ENCODE measurements at regions of chr18 and their contacts with region 1.

Region 1: GRCh38 chr18:4106407-4107033 is 348.6 kb downstream of the DLGAP1 start:
- DNase-seq: peak; percentile 8 to 65 (median 43)
- ATAC-seq: peak; percentile 52
- H3K4me3 ChIP-seq: no peak overlapping the region
- H3K4me3 Mint-ChIP-seq: no peak overlapping the region
- H3K27ac ChIP-seq: no peak overlapping the region
- H3K27ac Mint-ChIP-seq: no peak overlapping the region
- H3K4me1 ChIP-seq: no peaks in the 10 kb centered on the region
- H3K4me1 Mint-ChIP-seq: no peaks in the 10 kb centered on the region
- H3K27me3 ChIP-seq: no peaks in the 10 kb centered on the region
- H3K27me3 Mint-ChIP-seq: peaks cover 6% of the 10 kb centered on the region
- CTCF ChIP-seq: peak; percentile 85

Region 2: GRCh38 chr18:3931542-3932112 is 174.9 kb before region 1 on chr18:
- CTCF ChIA-PET with region 1: no interaction called
- POLR2A ChIA-PET with region 1: no interaction called
- intact Hi-C with region 1: no loop called
- DNase-seq: no peak
- ATAC-seq: no peak
- H3K4me3 ChIP-seq: no peak overlapping the region
- H3K4me3 Mint-ChIP-seq: no peak overlapping the region
- H3K27ac ChIP-seq: no peak overlapping the region
- H3K27ac Mint-ChIP-seq: no peak overlapping the region
- H3K4me1 ChIP-seq: no peaks in the 10 kb centered on the region
- H3K4me1 Mint-ChIP-seq: no peaks in the 10 kb centered on the region
- H3K27me3 ChIP-seq: no peaks in the 10 kb centered on the region
- H3K27me3 Mint-ChIP-seq: no peaks in the 10 kb centered on the region
- CTCF ChIP-seq: no peak

Region 3: DNA sequence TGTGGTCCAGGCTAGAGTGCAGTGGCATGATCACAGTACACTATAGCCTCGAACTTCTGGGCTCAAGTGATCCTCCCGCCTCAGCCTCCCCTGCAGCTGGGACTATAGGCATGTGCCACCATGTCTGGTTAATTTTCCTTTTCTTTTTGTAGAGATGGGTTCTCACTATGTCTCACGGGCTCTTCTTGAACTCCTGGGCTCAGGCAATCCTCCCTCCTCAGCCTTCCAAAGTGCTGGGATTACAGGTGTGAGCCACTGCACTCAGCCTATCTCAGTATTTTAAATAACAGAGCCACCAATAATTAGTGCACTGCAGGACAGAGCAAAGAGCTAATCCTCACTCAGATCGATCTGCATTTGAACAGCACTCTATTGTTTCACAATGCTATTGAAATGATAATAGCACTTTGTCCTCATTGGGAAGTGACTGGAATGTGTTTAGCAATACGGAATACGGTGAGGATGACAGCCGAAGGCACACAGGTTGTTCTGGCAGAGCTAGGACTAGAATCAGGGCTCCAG is 12.7 kb after region 1 on chr18:
- CTCF ChIA-PET with region 1: interaction called, 10 read pairs
- POLR2A ChIA-PET with region 1: no interaction called
- intact Hi-C with region 1: no loop called
- DNase-seq: no peak
- ATAC-seq: no peak
- H3K4me3 ChIP-seq: no peak overlapping the region
- H3K4me3 Mint-ChIP-seq: no peak overlapping the region
- H3K27ac ChIP-seq: no peak overlapping the region
- H3K27ac Mint-ChIP-seq: no peak overlapping the region
- H3K4me1 ChIP-seq: no peaks in the 10 kb centered on the region
- H3K4me1 Mint-ChIP-seq: no peaks in the 10 kb centered on the region
- H3K27me3 ChIP-seq: no peaks in the 10 kb centered on the region
- H3K27me3 Mint-ChIP-seq: peaks cover 13% of the 10 kb centered on the region
- CTCF ChIP-seq: no peak

Region 4: GRCh38 chr18:5057386-5058348 is 951.1 kb after region 1 on chr18:
- CTCF ChIA-PET with region 1: interaction called, 47 read pairs
- POLR2A ChIA-PET with region 1: no interaction called
- intact Hi-C with region 1: loop called in 1 of 2 experiments (anchors 1 kb)
- DNase-seq: peak in 8 of 9 experiments; percentile 16 to 68 (median 48)
- ATAC-seq: no peak
- H3K4me3 ChIP-seq: no peak overlapping the region
- H3K4me3 Mint-ChIP-seq: no peak overlapping the region
- H3K27ac ChIP-seq: no peak overlapping the region
- H3K27ac Mint-ChIP-seq: no peak overlapping the region
- H3K4me1 ChIP-seq: peaks cover 14% of the 10 kb centered on the region
- H3K4me1 Mint-ChIP-seq: peaks cover 23% of the 10 kb centered on the region
- H3K27me3 ChIP-seq: no peaks in the 10 kb centered on the region
- H3K27me3 Mint-ChIP-seq: no peaks in the 10 kb centered on the region
- CTCF ChIP-seq: peak; percentile 68